Activated B cell treated with CpG ODN at 0.5 μM for 24 hours (primary cell): ENCODE measurements at regions of chr12 and their contacts with region 1.

Region 1: GRCh38 chr12:14365294-14366208 is at the start of gene ATF7IP:
- DNase-seq: peak; percentile 89
- ATAC-seq: peak; percentile 83
- H3K4me3 Mint-ChIP-seq: peak within 1 kb of the TSS; percentile 87
- H3K27ac Mint-ChIP-seq: peak within 1 kb of the TSS; percentile 97
- H3K4me1 Mint-ChIP-seq: peaks cover 64% of the 10 kb centered on the region
- H3K27me3 Mint-ChIP-seq: no peaks in the 10 kb centered on the region
- CTCF ChIP-seq: no peak
- total RNA-seq, gene ATF7IP: 142 and 153 TPM in 2 replicates

Region 2: DNA sequence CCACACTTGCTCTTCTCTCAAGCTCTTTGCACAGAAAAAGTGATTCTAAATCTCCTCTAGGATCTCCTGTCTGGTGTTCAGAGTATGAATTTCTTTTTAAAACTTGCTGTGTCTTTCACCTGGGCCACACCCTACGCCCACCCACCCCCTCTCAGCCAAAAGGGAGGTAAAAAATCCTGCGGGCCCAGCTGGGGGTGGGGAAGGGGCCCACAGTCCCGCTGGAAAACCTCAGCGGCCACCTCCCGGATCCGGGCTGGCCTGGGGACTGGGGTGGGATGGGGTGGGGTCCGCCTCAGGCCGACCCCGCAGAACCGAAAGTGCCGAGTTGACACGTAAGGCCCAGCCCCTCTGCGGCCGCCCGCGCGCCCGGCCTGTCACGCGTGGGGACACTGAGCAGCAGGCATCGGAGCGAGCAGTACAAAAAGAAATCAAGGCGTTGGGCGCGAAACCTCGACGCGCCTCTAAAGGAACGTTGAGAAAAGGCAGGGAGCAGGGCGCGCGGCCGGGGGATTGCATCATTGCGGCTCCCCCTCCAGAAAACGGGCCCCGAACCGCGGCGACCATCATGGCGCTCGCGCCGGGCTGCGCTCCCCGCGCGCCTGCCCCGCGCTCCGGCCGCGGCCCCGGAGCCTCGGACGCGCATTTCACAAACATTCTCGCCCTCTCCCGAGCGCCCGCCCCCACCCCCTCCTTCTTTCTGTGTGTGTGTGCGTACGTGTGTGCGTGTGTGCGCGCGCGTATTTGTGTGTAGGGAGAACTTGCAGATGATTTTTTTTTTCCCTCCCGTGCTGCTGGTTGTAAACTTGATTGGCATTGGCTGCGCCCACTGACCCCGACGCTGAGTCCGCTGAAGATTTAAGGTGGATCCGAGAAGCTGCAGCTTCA is 1640.6 kb before region 1 on chr12:
- CTCF ChIA-PET with region 1: no interaction called
- POLR2A ChIA-PET with region 1: no interaction called
- intact Hi-C with region 1: loop called (anchors 5 kb)
- DNase-seq: peak; percentile 81
- ATAC-seq: peak; percentile 69
- H3K4me3 Mint-ChIP-seq: peak overlapping the region; percentile 97
- H3K27ac Mint-ChIP-seq: peak overlapping the region; percentile 97
- H3K4me1 Mint-ChIP-seq: peaks cover 50% of the 10 kb centered on the region
- H3K27me3 Mint-ChIP-seq: no peaks in the 10 kb centered on the region
- CTCF ChIP-seq: no peak

Region 3: GRCh38 chr12:14185427-14186192 is 179.9 kb before region 1 on chr12:
- CTCF ChIA-PET with region 1: interaction called, 17 read pairs
- POLR2A ChIA-PET with region 1: interaction called, 17 read pairs
- intact Hi-C with region 1: loop called (anchors 1 kb)
- DNase-seq: peak; percentile 41
- ATAC-seq: peak; percentile 86
- H3K4me3 Mint-ChIP-seq: peak overlapping the region; percentile 69
- H3K27ac Mint-ChIP-seq: peak overlapping the region; percentile 87
- H3K4me1 Mint-ChIP-seq: peaks cover 30% of the 10 kb centered on the region
- H3K27me3 Mint-ChIP-seq: no peaks in the 10 kb centered on the region
- CTCF ChIP-seq: peak; percentile 28

Region 4: DNA sequence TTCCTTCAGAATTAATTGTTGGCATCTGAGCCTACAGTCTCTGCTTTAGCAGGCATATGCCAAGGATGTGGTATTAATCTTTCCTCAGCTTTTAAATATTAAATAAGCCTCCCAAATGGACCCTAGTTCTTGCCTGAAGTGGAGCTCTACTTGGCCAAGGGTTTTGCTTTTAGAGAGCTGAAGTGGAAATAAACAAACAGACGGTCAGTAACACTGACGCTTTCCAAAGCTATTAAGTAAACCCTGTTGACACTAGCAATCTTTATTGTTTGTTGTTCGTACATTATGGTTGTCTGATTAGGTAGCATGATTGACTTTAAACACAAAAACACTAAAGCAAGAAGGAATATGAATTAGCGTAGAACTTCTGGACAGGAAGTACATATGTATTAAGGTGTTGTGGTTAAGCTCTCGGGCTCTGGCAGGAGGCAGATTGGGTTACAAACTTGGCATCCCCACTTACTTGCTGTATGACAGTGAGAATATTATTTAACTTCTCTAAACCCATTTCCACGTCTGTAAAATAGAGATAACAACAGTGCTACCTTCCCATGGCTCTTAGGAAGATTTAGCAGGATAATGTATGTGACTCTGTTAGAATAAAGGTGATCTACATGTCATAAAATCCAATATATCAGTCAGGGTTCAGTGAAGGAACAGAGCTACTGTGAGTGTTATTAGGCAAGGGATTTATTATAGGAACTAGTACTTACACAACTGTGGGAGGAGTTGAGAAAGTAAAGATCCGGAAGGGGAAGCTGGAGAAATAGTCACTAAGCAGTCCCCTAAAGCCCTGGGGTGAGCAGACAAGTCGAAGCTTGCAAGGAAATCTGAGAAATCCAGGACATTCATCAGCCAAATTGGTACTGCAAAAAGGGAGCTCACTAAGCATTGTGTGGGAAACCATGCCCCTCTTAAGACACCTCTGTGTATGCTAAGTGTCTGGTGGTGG is 92.3 kb before region 1 on chr12:
- CTCF ChIA-PET with region 1: interaction called, 4 read pairs
- POLR2A ChIA-PET with region 1: interaction called, 50 read pairs
- intact Hi-C with region 1: no loop called
- DNase-seq: no peak
- ATAC-seq: peak; percentile 68
- H3K4me3 Mint-ChIP-seq: peak overlapping the region; percentile 54
- H3K27ac Mint-ChIP-seq: peak overlapping the region; percentile 87
- H3K4me1 Mint-ChIP-seq: peaks cover 53% of the 10 kb centered on the region
- H3K27me3 Mint-ChIP-seq: no peaks in the 10 kb centered on the region
- CTCF ChIP-seq: no peak

Region 5: DNA sequence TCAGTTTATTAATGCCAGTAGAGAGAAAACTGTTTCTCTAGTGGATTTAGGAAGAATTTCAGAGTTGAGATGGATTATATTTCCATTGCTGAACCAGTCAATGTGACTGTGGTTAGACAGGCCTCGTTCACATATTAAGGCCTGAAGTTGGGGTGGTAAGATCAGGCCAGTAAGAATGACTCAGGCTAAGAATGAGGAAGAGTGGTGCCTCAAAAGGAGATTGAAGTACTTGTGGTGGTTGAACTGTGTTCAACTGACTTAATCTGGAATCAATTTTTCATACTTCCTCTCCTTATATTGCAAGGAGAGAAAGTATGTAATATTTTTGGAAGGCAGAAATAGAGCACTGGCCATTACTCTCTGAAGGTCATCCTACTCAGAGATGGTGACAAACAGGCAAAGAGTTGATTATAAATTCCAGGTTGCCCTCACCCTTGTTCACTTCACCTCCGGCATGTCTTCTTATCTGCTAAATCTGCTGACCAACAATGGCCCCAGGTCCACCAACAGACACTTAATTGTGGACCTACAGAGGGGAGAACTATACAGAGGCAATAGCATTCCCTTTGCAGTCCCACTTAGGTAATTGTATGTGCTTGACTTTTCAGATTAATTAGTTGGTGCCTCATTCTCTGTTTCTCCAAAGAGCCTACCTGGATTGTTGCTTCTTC is 37.7 kb before region 1 on chr12:
- CTCF ChIA-PET with region 1: no interaction called
- POLR2A ChIA-PET with region 1: interaction called, 4 read pairs
- intact Hi-C with region 1: loop called (anchors 5 kb)
- DNase-seq: no peak
- ATAC-seq: no peak
- H3K4me3 Mint-ChIP-seq: no peak overlapping the region
- H3K27ac Mint-ChIP-seq: no peak overlapping the region
- H3K4me1 Mint-ChIP-seq: peaks cover 22% of the 10 kb centered on the region
- H3K27me3 Mint-ChIP-seq: no peaks in the 10 kb centered on the region
- CTCF ChIP-seq: no peak

Region 6: DNA sequence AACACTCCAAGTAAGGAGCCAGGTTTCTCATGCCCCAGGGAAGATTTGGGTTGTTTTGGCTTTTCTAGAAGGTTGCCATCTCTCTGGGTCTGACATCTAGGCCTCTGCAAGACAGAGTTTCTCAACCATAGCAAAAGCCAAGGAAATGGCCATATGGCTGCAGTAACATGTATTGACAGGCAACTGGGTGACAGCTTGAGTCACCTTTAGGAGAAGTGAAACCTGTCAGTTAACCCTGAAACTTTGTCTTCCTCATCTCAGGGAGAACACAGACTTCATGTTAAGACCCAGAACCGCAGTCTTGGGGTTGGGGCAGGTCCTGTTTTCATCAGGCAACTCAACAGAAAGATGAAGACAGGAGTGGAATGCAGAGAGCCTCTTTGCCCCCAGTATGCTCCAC is 248.2 kb after region 1 on chr12:
- CTCF ChIA-PET with region 1: interaction called, 4 read pairs
- POLR2A ChIA-PET with region 1: interaction called, 13 read pairs
- intact Hi-C with region 1: loop called (anchors 1 kb)
- DNase-seq: peak; percentile 34
- ATAC-seq: peak; percentile 86
- H3K4me3 Mint-ChIP-seq: peak overlapping the region; percentile 60
- H3K27ac Mint-ChIP-seq: peak overlapping the region; percentile 93
- H3K4me1 Mint-ChIP-seq: peaks cover 38% of the 10 kb centered on the region
- H3K27me3 Mint-ChIP-seq: no peaks in the 10 kb centered on the region
- CTCF ChIP-seq: no peak